A673 (cell line): ENCODE measurements at regions of chr5 and their contacts with region 1.

Region 1: GRCh38 chr5:82165740-82166530 is 112.2 kb downstream of the RPS23 start:
- DNase-seq: peak; percentile 90
- H3K4me3 ChIP-seq: no peak overlapping the region
- H3K27ac ChIP-seq: peak overlapping the region; percentile 56
- H3K4me1 ChIP-seq: peaks cover 46% of the 10 kb centered on the region
- H3K27me3 ChIP-seq: no peaks in the 10 kb centered on the region
- CTCF ChIP-seq: peak; percentile 85

Region 2: GRCh38 chr5:81301271-81302015 is 864.5 kb before region 1 on chr5 and contains the start of gene ZCCHC9:
- CTCF ChIA-PET with region 1: interaction called, 5 read pairs
- POLR2A ChIA-PET with region 1: no interaction called
- intact Hi-C with region 1: loop called (anchors 5 kb)
- DNase-seq: peak; percentile 97
- H3K4me3 ChIP-seq: peak within 1 kb of the TSS; percentile 87
- H3K27ac ChIP-seq: peak within 1 kb of the TSS; percentile 91
- H3K4me1 ChIP-seq: peaks cover 36% of the 10 kb centered on the region
- H3K27me3 ChIP-seq: no peaks in the 10 kb centered on the region
- CTCF ChIP-seq: no peak; the same call in 1 of the 2 replicates
- total RNA-seq, gene ZCCHC9: 16.5 and 21.2 TPM in 2 replicates

Region 3: GRCh38 chr5:81506900-81507588 is 658.9 kb before region 1 on chr5:
- CTCF ChIA-PET with region 1: interaction called, 4 read pairs
- POLR2A ChIA-PET with region 1: no interaction called
- intact Hi-C with region 1: loop called (anchors 5 kb)
- DNase-seq: peak; percentile 89
- H3K4me3 ChIP-seq: no peak overlapping the region
- H3K27ac ChIP-seq: no peak overlapping the region
- H3K4me1 ChIP-seq: peaks cover 23% of the 10 kb centered on the region
- H3K27me3 ChIP-seq: no peaks in the 10 kb centered on the region
- CTCF ChIP-seq: peak; percentile 88

Region 4: GRCh38 chr5:81851481-81852178 is 314.3 kb before region 1 on chr5:
- CTCF ChIA-PET with region 1: interaction called, 15 read pairs
- POLR2A ChIA-PET with region 1: no interaction called
- intact Hi-C with region 1: loop called (anchors 1 kb)
- DNase-seq: peak; percentile 98
- H3K4me3 ChIP-seq: peak overlapping the region; percentile 37
- H3K27ac ChIP-seq: peak overlapping the region; percentile 98
- H3K4me1 ChIP-seq: peaks cover 71% of the 10 kb centered on the region
- H3K27me3 ChIP-seq: no peaks in the 10 kb centered on the region
- CTCF ChIP-seq: no peak

Region 5: GRCh38 chr5:82107267-82107666 is 58.7 kb before region 1 on chr5:
- CTCF ChIA-PET with region 1: interaction called, 24 read pairs
- POLR2A ChIA-PET with region 1: no interaction called
- intact Hi-C with region 1: loop called (anchors 2 kb)
- DNase-seq: peak; percentile 34
- H3K4me3 ChIP-seq: no peak overlapping the region
- H3K27ac ChIP-seq: no peak overlapping the region
- H3K4me1 ChIP-seq: peaks cover 31% of the 10 kb centered on the region
- H3K27me3 ChIP-seq: no peaks in the 10 kb centered on the region
- CTCF ChIP-seq: peak; percentile 62

Region 6: GRCh38 chr5:82396871-82397514 is 231.1 kb after region 1 on chr5:
- CTCF ChIA-PET with region 1: no interaction called
- POLR2A ChIA-PET with region 1: no interaction called
- intact Hi-C with region 1: no loop called
- DNase-seq: no peak
- H3K4me3 ChIP-seq: no peak overlapping the region
- H3K27ac ChIP-seq: no peak overlapping the region
- H3K4me1 ChIP-seq: no peaks in the 10 kb centered on the region
- H3K27me3 ChIP-seq: no peaks in the 10 kb centered on the region
- CTCF ChIP-seq: no peak